ENCODE measurements at regions of chr1 and their contacts with region 1.

Region 1: GRCh38 chr1:39653546-39654031 is 14.1 kb upstream of the HEYL start:
- DNase-seq: peak; percentile 93
- H3K4me3 ChIP-seq: no peak overlapping the region
- H3K27ac ChIP-seq: no peak overlapping the region
- H3K4me1 ChIP-seq: peaks cover 0 to 11% (median 3%) of the 10 kb centered on the region in 4 donors
- H3K27me3 ChIP-seq: peaks cover 0 to 6% (median 0%) of the 10 kb centered on the region in 3 donors
- CTCF ChIP-seq: peak; percentile 74 to 93 (median 85)
- EP300 ChIP-seq: no peak
- POLR2A ChIP-seq: no peak

Region 2: GRCh38 chr1:39378377-39378776 is 275.2 kb before region 1 on chr1:
- intact Hi-C with region 1: no loop called
- DNase-seq: no peak
- H3K4me3 ChIP-seq: no peak overlapping the region
- H3K27ac ChIP-seq: peak overlapping the region in 3 of 4 donors; percentile 16 to 22 (median 19)
- H3K4me1 ChIP-seq: peaks cover 0 to 11% (median 4%) of the 10 kb centered on the region in 4 donors
- H3K27me3 ChIP-seq: no peaks in the 10 kb centered on the region
- CTCF ChIP-seq: no peak
- EP300 ChIP-seq: no peak
- POLR2A ChIP-seq: no peak

Region 3: GRCh38 chr1:39592069-39592468 is 61.5 kb before region 1 on chr1:
- intact Hi-C with region 1: no loop called
- DNase-seq: no peak
- H3K4me3 ChIP-seq: no peak overlapping the region
- H3K27ac ChIP-seq: no peak overlapping the region
- H3K4me1 ChIP-seq: no peaks in the 10 kb centered on the region
- H3K27me3 ChIP-seq: no peaks in the 10 kb centered on the region
- CTCF ChIP-seq: no peak
- EP300 ChIP-seq: no peak
- POLR2A ChIP-seq: no peak

Region 4: DNA sequence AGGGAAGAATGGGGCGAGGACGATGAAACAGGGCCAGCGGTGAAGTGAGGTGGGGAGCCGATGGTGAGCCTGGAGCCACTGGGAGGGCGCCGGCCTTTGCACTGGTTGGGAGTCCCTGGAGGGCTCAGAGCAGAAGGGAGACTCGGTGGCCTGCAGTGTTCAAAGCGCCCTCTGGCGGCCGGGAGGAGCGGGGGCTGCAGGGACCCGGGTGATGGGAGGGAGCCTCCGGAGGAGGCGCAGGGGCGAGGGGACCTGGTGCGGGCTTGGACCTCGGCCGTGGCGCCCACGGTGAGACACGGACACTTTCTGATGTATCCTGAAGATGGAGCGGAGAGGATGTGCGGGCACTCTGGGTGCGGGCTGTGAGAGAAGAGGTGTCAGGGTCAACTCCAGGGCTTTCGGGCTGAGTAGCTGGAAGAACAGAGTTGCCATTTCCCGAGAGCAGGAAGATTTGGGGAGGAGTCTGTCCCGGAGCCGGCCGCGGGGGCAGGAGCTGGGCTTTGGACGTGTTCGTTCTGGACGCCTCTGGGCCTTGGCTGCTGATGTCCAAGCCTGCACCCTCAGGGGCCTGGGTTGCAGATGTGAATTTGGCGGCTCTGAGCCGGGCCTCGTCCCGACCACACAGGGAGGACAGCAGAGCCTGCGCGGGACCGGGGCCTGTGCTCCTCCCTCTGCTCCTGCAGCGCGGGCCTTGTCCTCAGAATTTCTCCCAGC is 43.8 kb before region 1 on chr1:
- intact Hi-C with region 1: loop called (anchors 1 kb)
- DNase-seq: peak; percentile 83
- H3K4me3 ChIP-seq: no peak overlapping the region
- H3K27ac ChIP-seq: peak overlapping the region in 3 of 4 donors; percentile 14 to 34 (median 19)
- H3K4me1 ChIP-seq: no peaks in the 10 kb centered on the region
- H3K27me3 ChIP-seq: peaks cover 0 to 7% (median 0%) of the 10 kb centered on the region in 3 donors
- CTCF ChIP-seq: peak in 2 of 4 experiments; percentile 32 to 38
- EP300 ChIP-seq: no peak
- POLR2A ChIP-seq: no peak

Region 5: DNA sequence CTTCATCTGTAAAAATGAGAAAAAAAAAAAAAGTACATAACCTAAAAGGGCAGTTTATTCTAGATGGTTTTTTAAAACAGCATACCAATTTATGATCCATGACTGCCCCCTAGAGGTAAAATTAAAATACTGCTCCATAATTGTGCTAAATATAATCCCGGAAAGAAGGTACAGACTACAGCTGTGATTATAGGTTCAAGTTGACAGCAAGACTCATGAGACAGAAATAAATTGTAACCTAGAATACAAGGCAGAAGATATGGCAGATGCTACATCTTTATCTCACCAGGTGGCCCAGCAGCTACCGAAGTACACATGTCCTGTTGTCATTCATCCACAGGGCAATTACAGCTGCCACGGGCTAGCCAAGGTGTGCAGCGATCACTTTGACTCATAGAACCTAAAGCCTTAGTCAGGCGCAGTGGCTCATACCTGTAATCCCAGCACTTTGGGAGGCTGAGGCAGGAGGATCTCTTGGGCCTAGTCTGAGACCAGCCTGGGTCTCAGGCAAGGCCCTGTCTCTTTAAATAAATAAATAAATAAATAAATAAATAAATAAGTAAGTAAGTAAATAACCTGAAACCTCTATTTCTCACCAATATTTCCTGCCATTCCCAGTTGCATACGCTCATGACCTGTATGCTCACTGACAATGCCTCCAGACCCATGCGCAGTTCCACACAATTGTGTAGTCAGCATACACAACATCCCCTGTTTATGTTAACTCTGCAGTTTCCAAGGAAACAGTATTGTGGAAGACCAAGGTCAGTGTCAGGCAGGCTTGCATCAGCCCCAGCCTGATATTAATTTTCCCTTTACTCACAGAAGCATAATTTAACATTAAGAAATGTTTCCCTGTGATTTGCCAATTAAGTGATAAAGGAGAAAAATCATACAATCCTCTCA is 66.8 kb after region 1 on chr1:
- intact Hi-C with region 1: loop called (anchors 5 kb)
- DNase-seq: no peak
- H3K4me3 ChIP-seq: no peak overlapping the region
- H3K27ac ChIP-seq: no peak overlapping the region
- H3K4me1 ChIP-seq: no peaks in the 10 kb centered on the region
- H3K27me3 ChIP-seq: peaks cover 0 to 2% (median 0%) of the 10 kb centered on the region in 3 donors
- CTCF ChIP-seq: peak; percentile 33 to 67 (median 61)
- EP300 ChIP-seq: no peak
- POLR2A ChIP-seq: no peak